Activated CD4-positive, alpha-beta T cell treated with anti-CD3 and anti-CD28 coated beads, Interleukin-2, amount 10 ng/mL, durations not matched to agents 24 days and 14 days (primary cell): ENCODE measurements at regions of chr15 and their contacts with region 1.

Region 1: DNA sequence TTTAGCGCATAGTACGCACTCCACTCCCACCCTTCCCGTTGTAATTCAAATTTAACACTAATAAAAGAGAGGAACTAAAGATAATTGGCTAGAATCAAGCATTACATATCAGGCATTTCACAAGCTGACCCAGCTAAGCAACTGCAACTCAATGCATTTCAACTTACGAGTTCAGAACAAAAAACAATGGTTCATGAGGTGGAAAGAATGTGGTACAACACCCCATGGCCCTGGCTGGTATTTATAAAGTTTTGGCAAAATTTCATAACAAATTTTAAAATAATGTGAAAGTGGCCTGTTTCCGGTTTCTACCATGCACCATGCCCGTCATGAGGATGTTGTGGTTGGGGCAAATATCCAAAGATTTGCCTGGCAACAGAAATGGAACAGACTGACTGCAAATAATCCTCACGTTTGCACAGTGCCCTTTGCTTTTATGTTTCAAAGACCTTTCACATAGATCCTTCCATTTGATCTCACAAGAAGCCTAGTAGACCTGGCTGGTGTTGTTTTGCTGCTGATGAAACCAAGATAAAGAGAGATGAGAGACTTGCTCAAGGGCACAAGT is 455.3 kb upstream of the NR2F2 start:
- DNase-seq: peak; percentile 66
- H3K4me3 Mint-ChIP-seq: no peak overlapping the region
- H3K27ac Mint-ChIP-seq: no peak overlapping the region
- H3K4me1 Mint-ChIP-seq: peaks cover 30% of the 10 kb centered on the region
- H3K27me3 Mint-ChIP-seq: peaks cover 7% of the 10 kb centered on the region

Region 2: GRCh38 chr15:95839367-95839782 is 35.8 kb before region 1 on chr15:
- intact Hi-C with region 1: loop called (anchors 2 kb)
- DNase-seq: peak; percentile 82
- H3K4me3 Mint-ChIP-seq: peak overlapping the region; percentile 49
- H3K27ac Mint-ChIP-seq: peak overlapping the region; percentile 74
- H3K4me1 Mint-ChIP-seq: peaks cover 40% of the 10 kb centered on the region
- H3K27me3 Mint-ChIP-seq: peaks cover 9% of the 10 kb centered on the region